CD4-positive, alpha-beta T cell (primary cell): ENCODE measurements at regions of chr6 and their contacts with region 1.

Region 1: DNA sequence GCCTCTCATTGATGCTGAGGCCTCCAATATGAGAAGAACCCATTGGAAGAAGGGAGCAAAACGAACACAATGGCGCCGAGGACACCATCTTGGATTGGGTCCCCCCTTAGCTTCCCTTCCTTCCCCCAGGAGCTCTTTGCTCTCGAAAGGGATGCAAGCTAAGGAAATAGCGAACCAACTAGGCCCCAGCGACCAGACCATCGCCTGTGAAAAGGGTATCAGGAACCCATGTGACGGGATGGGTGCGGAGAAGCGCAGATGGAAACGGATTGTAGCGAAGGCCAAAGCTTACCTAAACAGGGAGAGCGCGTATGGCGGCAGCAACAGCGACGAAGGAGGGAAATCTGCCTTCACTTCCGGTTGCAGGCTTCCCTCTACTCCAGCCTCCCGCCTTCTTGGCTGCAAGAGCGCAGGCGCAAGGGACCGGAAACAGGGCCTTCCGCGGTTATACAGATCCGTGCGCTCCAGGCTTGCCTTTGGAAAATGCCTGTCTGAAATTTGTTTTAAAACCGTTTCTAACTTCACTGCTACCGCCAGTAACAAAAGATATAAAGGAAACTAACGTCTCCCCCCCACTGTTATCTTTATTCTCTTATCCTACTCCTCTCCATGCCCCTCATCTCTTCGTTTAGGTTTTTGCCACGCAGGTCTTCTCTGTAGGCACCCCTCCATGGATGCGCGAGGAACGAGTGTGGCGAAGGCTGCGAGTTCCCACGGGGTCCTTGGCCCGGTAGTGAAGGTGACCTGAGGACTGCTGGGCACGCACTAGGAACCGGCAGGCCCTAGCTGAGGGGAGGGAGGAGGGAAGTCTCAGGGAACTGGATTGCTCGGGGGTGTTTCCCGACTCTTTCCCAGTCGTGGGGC is at the start of gene DDX39B:
- DNase-seq: peak; percentile 87 to 99 (median 92)
- ATAC-seq: peak; percentile 71
- H3K4me3 ChIP-seq: peak within 1 kb of the TSS; percentile 91
- H3K4me3 Mint-ChIP-seq: peak within 1 kb of the TSS; percentile 96
- H3K27ac ChIP-seq: peak within 1 kb of the TSS; percentile 94 to 95
- H3K27ac Mint-ChIP-seq: peak within 1 kb of the TSS; percentile 99
- H3K4me1 ChIP-seq: peaks cover 53% of the 10 kb centered on the region
- H3K4me1 Mint-ChIP-seq: peaks cover 56% of the 10 kb centered on the region
- H3K27me3 ChIP-seq: no peaks in the 10 kb centered on the region
- H3K27me3 Mint-ChIP-seq: no peaks in the 10 kb centered on the region
- CTCF ChIP-seq: no peak
- total RNA-seq, gene DDX39B: 483 to 498 TPM

Region 2: GRCh38 chr6:31462964-31463870 is 78.7 kb before region 1 on chr6:
- CTCF ChIA-PET with region 1: no interaction called
- POLR2A ChIA-PET with region 1: interaction called, 13 read pairs
- intact Hi-C with region 1: no loop called
- DNase-seq: peak; percentile 81 to 97 (median 87)
- ATAC-seq: peak; percentile 97
- H3K4me3 ChIP-seq: peak overlapping the region; percentile 89
- H3K4me3 Mint-ChIP-seq: peak overlapping the region; percentile 99
- H3K27ac ChIP-seq: peak overlapping the region; percentile 91 to 99
- H3K27ac Mint-ChIP-seq: peak overlapping the region; percentile 96
- H3K4me1 ChIP-seq: peaks cover 58% of the 10 kb centered on the region
- H3K4me1 Mint-ChIP-seq: peaks cover 69% of the 10 kb centered on the region
- H3K27me3 ChIP-seq: no peaks in the 10 kb centered on the region
- H3K27me3 Mint-ChIP-seq: peaks cover 6% of the 10 kb centered on the region
- CTCF ChIP-seq: no peak

Region 3: DNA sequence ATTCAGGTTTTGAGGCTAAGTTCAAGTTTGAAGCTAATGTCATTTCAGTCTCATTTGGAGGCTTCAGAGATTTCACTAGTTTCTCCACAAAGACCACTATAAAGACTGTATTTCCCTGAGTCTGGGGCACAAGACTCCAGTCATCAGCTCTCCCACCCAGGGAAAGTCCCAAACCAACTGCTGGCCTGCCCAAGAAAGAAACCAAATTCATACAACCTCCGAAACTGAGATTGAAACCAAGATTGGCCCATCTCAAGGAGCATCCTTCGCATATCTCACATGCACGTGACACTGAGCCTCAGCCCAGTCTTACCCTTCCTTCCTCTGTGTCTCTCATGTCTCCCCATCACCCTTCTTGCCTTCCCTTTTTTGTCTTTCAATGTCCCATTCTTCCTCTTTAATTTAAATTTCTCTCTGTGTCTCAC is 26.7 kb after region 1 on chr6:
- CTCF ChIA-PET with region 1: interaction called, 169 read pairs
- POLR2A ChIA-PET with region 1: interaction called, 220 read pairs
- intact Hi-C with region 1: no loop called
- DNase-seq: peak in 9 of 14 experiments; percentile 31 to 95 (median 61)
- ATAC-seq: peak; percentile 60
- H3K4me3 ChIP-seq: no peak overlapping the region
- H3K4me3 Mint-ChIP-seq: peak overlapping the region; percentile 65
- H3K27ac ChIP-seq: peak overlapping the region; percentile 78 to 88
- H3K27ac Mint-ChIP-seq: peak overlapping the region; percentile 95
- H3K4me1 ChIP-seq: peaks cover 83% of the 10 kb centered on the region
- H3K4me1 Mint-ChIP-seq: peaks cover 81% of the 10 kb centered on the region
- H3K27me3 ChIP-seq: no peaks in the 10 kb centered on the region
- H3K27me3 Mint-ChIP-seq: no peaks in the 10 kb centered on the region
- CTCF ChIP-seq: no peak

Region 4: DNA sequence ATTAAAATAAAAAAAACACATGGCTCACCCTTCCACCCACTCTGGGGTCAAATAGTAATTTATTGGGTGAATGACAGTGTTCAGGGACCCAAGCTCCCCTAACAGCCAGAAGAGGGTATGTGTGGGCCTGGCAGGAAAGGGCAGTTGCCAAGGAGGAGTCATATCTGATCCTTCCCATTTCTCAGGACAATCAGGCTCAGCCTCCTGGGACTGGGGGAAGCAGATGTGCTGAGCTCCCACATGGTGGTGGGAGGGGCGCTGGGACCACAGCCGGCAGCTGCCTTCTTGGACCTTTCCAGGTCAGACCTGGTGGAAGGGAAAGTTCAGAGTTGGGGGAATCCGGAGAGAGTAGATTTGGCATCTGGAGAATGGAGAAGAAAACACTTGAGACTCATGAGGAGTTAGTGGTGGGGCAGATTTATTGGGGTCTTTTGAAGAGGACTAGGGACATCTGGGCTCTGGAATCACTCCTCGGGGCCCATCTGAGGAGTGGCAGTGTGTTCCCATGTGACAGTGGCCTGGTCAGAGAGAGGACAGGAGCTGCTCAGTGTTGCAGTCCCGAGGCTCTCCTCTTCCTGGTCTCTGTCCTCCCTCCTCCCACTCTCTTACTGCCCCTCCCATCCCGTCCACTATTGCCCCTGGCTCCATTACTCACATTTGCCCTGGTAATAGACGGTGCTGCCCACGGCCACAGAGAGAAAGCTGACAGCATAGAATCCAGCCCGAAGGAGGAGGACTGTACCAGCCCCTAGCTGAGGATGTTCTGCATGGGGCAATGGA is 47.2 kb after region 1 on chr6:
- CTCF ChIA-PET with region 1: interaction called, 284 read pairs
- POLR2A ChIA-PET with region 1: interaction called, 220 read pairs
- intact Hi-C with region 1: no loop called
- DNase-seq: no peak
- ATAC-seq: no peak
- H3K4me3 ChIP-seq: no peak overlapping the region
- H3K4me3 Mint-ChIP-seq: peak overlapping the region; percentile 23
- H3K27ac ChIP-seq: no peak overlapping the region
- H3K27ac Mint-ChIP-seq: peak overlapping the region; percentile 85
- H3K4me1 ChIP-seq: peaks cover 81% of the 10 kb centered on the region
- H3K4me1 Mint-ChIP-seq: peaks cover 74% of the 10 kb centered on the region
- H3K27me3 ChIP-seq: no peaks in the 10 kb centered on the region
- H3K27me3 Mint-ChIP-seq: no peaks in the 10 kb centered on the region
- CTCF ChIP-seq: no peak

Region 5: GRCh38 chr6:31652925-31653718 is 111.2 kb after region 1 on chr6:
- CTCF ChIA-PET with region 1: no interaction called
- POLR2A ChIA-PET with region 1: interaction called, 29 read pairs
- intact Hi-C with region 1: loop called in 1 of 2 experiments (anchors 5 kb)
- DNase-seq: peak in 4 of 14 experiments; percentile 14 to 93 (median 80)
- ATAC-seq: peak; percentile 70
- H3K4me3 ChIP-seq: peak overlapping the region; percentile 63
- H3K4me3 Mint-ChIP-seq: peak overlapping the region; percentile 97
- H3K27ac ChIP-seq: peak overlapping the region; percentile 99
- H3K27ac Mint-ChIP-seq: peak overlapping the region; percentile 98
- H3K4me1 ChIP-seq: peaks cover 46% of the 10 kb centered on the region
- H3K4me1 Mint-ChIP-seq: peaks cover 65% of the 10 kb centered on the region
- H3K27me3 ChIP-seq: no peaks in the 10 kb centered on the region
- H3K27me3 Mint-ChIP-seq: no peaks in the 10 kb centered on the region
- CTCF ChIP-seq: no peak

Region 6: DNA sequence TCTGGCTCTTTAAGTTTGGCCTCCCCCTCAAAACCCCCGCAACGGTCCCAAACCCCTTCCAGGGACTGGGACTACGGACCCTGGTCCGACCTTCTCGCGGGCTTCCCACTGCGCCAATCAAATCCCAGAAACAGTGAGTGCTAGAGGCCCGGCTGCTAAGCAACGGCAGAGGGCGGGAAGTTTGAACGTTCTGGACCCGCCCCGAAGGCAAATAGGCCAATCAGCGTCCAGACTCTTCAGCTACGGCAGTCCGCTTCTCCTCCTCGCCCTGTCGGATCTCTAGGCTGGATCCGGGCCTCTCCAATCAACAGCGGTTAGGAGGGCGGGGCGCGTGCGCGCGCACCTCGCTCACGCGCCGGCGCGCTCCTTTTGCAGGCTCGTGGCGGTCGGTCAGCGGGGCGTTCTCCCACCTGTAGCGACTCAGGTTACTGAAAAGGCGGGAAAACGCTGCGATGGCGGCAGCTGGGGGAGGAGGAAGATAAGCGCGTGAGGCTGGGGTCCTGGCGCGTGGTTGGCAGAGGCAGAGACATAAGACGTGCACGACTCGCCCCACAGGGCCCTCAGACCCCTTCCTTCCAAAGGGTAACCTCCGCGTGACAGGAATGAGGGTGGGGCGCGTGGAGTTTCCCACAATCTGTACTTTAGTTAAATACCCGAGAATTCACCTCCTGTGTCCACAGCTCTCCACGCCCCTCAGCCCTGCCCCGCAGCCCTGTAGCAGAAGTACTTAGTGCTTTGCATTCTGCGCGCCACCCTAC is 197.9 kb after region 1 on chr6 and contains the start of gene MSH5:
- CTCF ChIA-PET with region 1: no interaction called
- POLR2A ChIA-PET with region 1: no interaction called
- intact Hi-C with region 1: no loop called
- DNase-seq: peak; percentile 85 to 98 (median 93)
- ATAC-seq: peak; percentile 85
- H3K4me3 ChIP-seq: peak within 1 kb of the TSS; percentile 87
- H3K4me3 Mint-ChIP-seq: peak within 1 kb of the TSS; percentile 90
- H3K27ac ChIP-seq: peak within 1 kb of the TSS; percentile 38 to 58
- H3K27ac Mint-ChIP-seq: peak within 1 kb of the TSS; percentile 85
- H3K4me1 ChIP-seq: peaks cover 53% of the 10 kb centered on the region
- H3K4me1 Mint-ChIP-seq: peaks cover 61% of the 10 kb centered on the region
- H3K27me3 ChIP-seq: no peaks in the 10 kb centered on the region
- H3K27me3 Mint-ChIP-seq: no peaks in the 10 kb centered on the region
- CTCF ChIP-seq: no peak
- total RNA-seq, gene MSH5: 13.6 to 13.7 TPM

Region 7: DNA sequence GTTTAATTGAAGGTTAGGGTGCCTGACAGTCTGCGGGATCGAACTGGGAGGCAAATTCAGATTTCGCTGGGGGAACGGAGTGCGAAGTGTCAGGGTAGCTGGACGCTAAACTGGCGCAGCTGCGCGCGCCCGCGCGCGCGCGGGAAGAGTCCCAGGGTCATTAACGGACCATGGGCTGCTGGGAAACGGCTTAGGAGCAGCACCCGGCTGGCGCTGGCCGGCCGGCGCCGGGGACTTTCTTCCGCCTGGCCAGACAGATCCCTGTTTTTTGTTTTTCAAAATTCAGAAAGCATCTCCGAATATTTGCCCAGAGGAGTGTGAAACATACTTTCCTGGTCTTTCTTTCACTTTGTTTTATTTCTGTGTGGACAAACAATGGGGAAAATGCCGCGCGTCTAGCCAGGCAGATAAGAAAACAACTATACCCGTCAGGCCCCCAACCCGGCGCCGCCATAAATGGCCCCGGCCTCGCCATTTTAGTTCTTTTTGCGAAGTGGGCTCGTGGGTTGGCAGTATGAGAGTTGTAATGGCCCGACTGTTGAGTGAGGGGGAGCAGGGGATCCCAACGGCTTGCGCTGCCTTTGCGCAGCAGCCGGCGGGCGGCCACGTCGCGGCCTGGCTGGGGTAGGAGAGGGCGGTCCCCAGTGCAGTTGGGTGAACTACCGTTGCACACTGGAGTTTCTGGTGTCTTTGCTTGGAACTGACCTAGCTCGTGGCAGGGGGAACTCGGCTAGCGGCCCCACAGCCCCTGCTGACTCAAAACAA is 292.7 kb after region 1 on chr6:
- CTCF ChIA-PET with region 1: no interaction called
- POLR2A ChIA-PET with region 1: interaction called, 6 read pairs
- intact Hi-C with region 1: loop called (anchors 2 kb)
- DNase-seq: peak; percentile 72 to 89 (median 78)
- ATAC-seq: peak; percentile 71
- H3K4me3 ChIP-seq: peak overlapping the region; percentile 94
- H3K4me3 Mint-ChIP-seq: peak overlapping the region; percentile 96
- H3K27ac ChIP-seq: peak overlapping the region; percentile 97 to 98
- H3K27ac Mint-ChIP-seq: peak overlapping the region; percentile 98
- H3K4me1 ChIP-seq: peaks cover 66% of the 10 kb centered on the region
- H3K4me1 Mint-ChIP-seq: peaks cover 60% of the 10 kb centered on the region
- H3K27me3 ChIP-seq: no peaks in the 10 kb centered on the region
- H3K27me3 Mint-ChIP-seq: no peaks in the 10 kb centered on the region
- CTCF ChIP-seq: no peak

Region 8: GRCh38 chr6:33417903-33418689 is 1876.2 kb after region 1 on chr6 and contains the start of gene CUTA:
- CTCF ChIA-PET with region 1: no interaction called
- POLR2A ChIA-PET with region 1: no interaction called
- intact Hi-C with region 1: no loop called
- DNase-seq: peak; percentile 97 to 100 (median 98)
- ATAC-seq: peak; percentile 85
- H3K4me3 ChIP-seq: peak within 1 kb of the TSS; percentile 82
- H3K4me3 Mint-ChIP-seq: peak within 1 kb of the TSS; percentile 92
- H3K27ac ChIP-seq: peak within 1 kb of the TSS; percentile 97 to 99
- H3K27ac Mint-ChIP-seq: peak within 1 kb of the TSS; percentile 98
- H3K4me1 ChIP-seq: peaks cover 77% of the 10 kb centered on the region
- H3K4me1 Mint-ChIP-seq: peaks cover 79% of the 10 kb centered on the region
- H3K27me3 ChIP-seq: no peaks in the 10 kb centered on the region
- H3K27me3 Mint-ChIP-seq: no peaks in the 10 kb centered on the region
- CTCF ChIP-seq: peak; percentile 30
- total RNA-seq, gene CUTA: 176 to 185 TPM